Activated naive CD4-positive, alpha-beta T cell treated with anti-CD3 and anti-CD28 coated beads, Interleukin-2, amount 10 ng/mL, durations not matched to agents 7 days and 5 days (primary cell): ENCODE measurements at regions of chr3 and their contacts with region 1.

Region 1: GRCh38 chr3:184229394-184230080 is at the start of gene VWA5B2:
- DNase-seq: peak; percentile 74
- H3K4me3 Mint-ChIP-seq: peak within 1 kb of the TSS; percentile 53
- H3K27ac Mint-ChIP-seq: no peak within 1 kb of the TSS
- H3K4me1 Mint-ChIP-seq: peaks cover 9% of the 10 kb centered on the region
- H3K27me3 Mint-ChIP-seq: peaks cover 93% of the 10 kb centered on the region

Region 2: GRCh38 chr3:184145111-184145524 is 84.4 kb before region 1 on chr3:
- CTCF ChIA-PET with region 1: interaction called, 15 read pairs
- DNase-seq: peak; percentile 54
- H3K4me3 Mint-ChIP-seq: no peak overlapping the region
- H3K27ac Mint-ChIP-seq: no peak overlapping the region
- H3K4me1 Mint-ChIP-seq: no peaks in the 10 kb centered on the region
- H3K27me3 Mint-ChIP-seq: peaks cover 4% of the 10 kb centered on the region

Region 3: GRCh38 chr3:184209146-184209923 is 20.2 kb before region 1 on chr3:
- CTCF ChIA-PET with region 1: interaction called, 25 read pairs
- DNase-seq: no peak
- H3K4me3 Mint-ChIP-seq: no peak overlapping the region
- H3K27ac Mint-ChIP-seq: no peak overlapping the region
- H3K4me1 Mint-ChIP-seq: no peaks in the 10 kb centered on the region
- H3K27me3 Mint-ChIP-seq: peaks cover 24% of the 10 kb centered on the region

Region 4: GRCh38 chr3:184250167-184250828 is 20.8 kb after region 1 on chr3:
- CTCF ChIA-PET with region 1: interaction called, 26 read pairs
- DNase-seq: peak; percentile 94
- H3K4me3 Mint-ChIP-seq: peak overlapping the region; percentile 90
- H3K27ac Mint-ChIP-seq: peak overlapping the region; percentile 98
- H3K4me1 Mint-ChIP-seq: peaks cover 27% of the 10 kb centered on the region
- H3K27me3 Mint-ChIP-seq: no peaks in the 10 kb centered on the region

Region 5: DNA sequence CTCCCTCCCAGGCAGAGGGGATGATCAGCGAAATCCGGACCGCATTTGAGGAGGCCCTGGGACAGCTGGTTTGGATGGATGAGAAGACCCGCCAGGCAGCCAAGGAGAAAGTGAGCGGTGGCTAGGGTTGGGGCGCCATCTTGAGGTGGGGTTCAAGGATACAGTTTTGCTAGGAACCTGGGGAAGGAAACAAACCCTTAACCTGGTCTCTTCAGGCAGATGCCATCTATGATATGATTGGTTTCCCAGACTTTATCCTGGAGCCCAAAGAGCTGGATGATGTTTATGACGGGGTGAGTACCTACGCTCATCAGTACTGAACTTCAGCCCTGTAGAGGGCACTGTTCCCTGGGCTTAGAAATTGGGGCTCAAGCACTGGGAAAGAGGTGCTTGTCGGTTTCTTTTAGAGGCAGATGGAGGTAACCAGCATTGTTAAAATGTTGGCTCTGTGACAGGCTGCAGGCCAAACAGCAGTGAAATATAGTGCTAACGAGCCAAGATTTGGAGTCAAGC is 59.9 kb after region 1 on chr3:
- CTCF ChIA-PET with region 1: interaction called, 43 read pairs
- DNase-seq: peak; percentile 81
- H3K4me3 Mint-ChIP-seq: no peak overlapping the region
- H3K27ac Mint-ChIP-seq: no peak overlapping the region
- H3K4me1 Mint-ChIP-seq: peaks cover 2% of the 10 kb centered on the region
- H3K27me3 Mint-ChIP-seq: peaks cover 54% of the 10 kb centered on the region